ENCODE measurements at regions of chr12 and their contacts with region 1.

Region 1: DNA sequence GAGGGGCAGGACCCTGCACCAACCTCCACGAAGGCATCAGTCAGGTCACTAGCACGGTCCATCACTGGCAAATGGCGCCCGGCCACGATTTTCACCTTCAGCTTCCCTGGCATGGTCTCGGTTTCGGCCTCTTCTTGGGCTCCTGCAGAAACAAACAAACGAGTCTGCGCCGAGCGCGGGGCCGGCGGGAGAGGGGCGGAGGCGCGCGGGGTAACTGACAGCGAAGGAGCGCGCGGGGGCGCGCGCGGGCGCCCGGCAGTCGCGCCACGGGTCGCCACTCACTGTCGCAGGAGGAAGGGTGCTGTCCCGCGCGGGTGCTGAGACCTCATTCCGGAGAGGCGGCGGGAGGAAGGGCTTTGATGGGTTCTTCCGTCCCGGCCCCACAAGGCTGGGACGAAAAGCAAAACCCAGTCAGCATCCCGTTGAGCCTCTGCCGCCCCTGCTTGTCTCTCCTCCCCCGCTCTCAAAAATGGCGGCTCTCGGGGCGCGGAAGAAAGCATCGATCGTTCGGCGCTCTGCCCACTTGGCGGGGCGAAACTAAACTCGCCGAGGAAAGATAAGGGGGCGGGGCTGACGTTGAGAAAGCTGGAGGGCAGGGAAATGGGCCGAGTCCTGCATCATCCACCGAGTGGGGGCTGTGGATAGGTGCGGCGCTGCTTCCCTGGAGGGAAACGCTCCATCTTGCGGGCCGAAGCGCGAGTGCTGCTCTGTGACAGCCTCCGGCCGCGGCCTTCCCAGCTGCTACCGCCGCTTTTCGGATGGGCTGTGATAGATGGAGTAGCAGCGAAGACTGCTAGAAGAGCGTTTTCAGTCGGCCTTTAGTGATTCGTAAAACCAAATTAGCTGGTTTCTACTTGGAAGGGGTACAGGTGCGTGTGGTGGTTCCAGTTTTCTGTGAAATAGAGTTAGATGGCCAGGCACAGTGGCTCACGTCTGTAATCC is at the start of gene C2CD5:
- DNase-seq: peak; percentile 82 to 97 (median 96)
- ATAC-seq: peak; percentile 87 to 89
- H3K4me3 Mint-ChIP-seq: peak within 1 kb of the TSS; percentile 89 to 96 (median 94)
- H3K27ac Mint-ChIP-seq: peak within 1 kb of the TSS; percentile 95 to 98 (median 98)
- H3K4me1 Mint-ChIP-seq: peaks cover 23 to 46% (median 40%) of the 10 kb centered on the region in 4 donors
- H3K27me3 Mint-ChIP-seq: peaks cover 0 to 10% (median 4%) of the 10 kb centered on the region in 5 donors
- polyA plus RNA-seq, gene C2CD5: 10.1 to 16.7 (median 13.3) TPM

Region 2: GRCh38 chr12:22624870-22625761 is 80.8 kb after region 1 on chr12 and contains the start of gene ETNK1:
- POLR2A ChIA-PET with region 1: interaction called, 25 read pairs
- DNase-seq: peak; percentile 71 to 87 (median 80)
- ATAC-seq: peak; percentile 96 to 97
- H3K4me3 Mint-ChIP-seq: peak within 1 kb of the TSS; percentile 86 to 98 (median 94)
- H3K27ac Mint-ChIP-seq: peak within 1 kb of the TSS; percentile 91 to 99 (median 98)
- H3K4me1 Mint-ChIP-seq: peaks cover 15 to 49% (median 41%) of the 10 kb centered on the region in 4 donors
- H3K27me3 Mint-ChIP-seq: peaks cover 0 to 4% (median 1%) of the 10 kb centered on the region in 5 donors
- polyA plus RNA-seq, gene ETNK1: 13.7 to 14.3 (median 14.0) TPM

Measured in naive thymus-derived CD8-positive, alpha-beta T cell (primary cell).